ENCODE measurements at regions of chr1 and their contacts with region 1.

Region 1: GRCh38 chr1:170471398-170472053 is 60.4 kb upstream of the GORAB start:
- DNase-seq: no peak
- ATAC-seq: no peak
- H3K4me3 ChIP-seq: no peak overlapping the region
- H3K4me3 Mint-ChIP-seq: no peak overlapping the region
- H3K27ac ChIP-seq: no peak overlapping the region
- H3K27ac Mint-ChIP-seq: no peak overlapping the region
- H3K4me1 ChIP-seq: no peaks in the 10 kb centered on the region
- H3K4me1 Mint-ChIP-seq: no peaks in the 10 kb centered on the region
- H3K27me3 ChIP-seq: no peaks in the 10 kb centered on the region
- H3K27me3 Mint-ChIP-seq: peaks cover 3 to 28% (median 17%) of the 10 kb centered on the region in 5 donors

Region 2: GRCh38 chr1:170410401-170411166 is 60.9 kb before region 1 on chr1:
- CTCF ChIA-PET with region 1: no interaction called
- POLR2A ChIA-PET with region 1: no interaction called
- intact Hi-C with region 1: loop called in 1 of 2 experiments (anchors 10 kb)
- DNase-seq: no peak
- ATAC-seq: no peak
- H3K4me3 ChIP-seq: no peak overlapping the region
- H3K4me3 Mint-ChIP-seq: no peak overlapping the region
- H3K27ac ChIP-seq: no peak overlapping the region
- H3K27ac Mint-ChIP-seq: peak overlapping the region in 1 of 9 donors; percentile 69
- H3K4me1 ChIP-seq: no peaks in the 10 kb centered on the region
- H3K4me1 Mint-ChIP-seq: no peaks in the 10 kb centered on the region
- H3K27me3 ChIP-seq: no peaks in the 10 kb centered on the region
- H3K27me3 Mint-ChIP-seq: peaks cover 0 to 38% (median 12%) of the 10 kb centered on the region in 5 donors

Region 3: DNA sequence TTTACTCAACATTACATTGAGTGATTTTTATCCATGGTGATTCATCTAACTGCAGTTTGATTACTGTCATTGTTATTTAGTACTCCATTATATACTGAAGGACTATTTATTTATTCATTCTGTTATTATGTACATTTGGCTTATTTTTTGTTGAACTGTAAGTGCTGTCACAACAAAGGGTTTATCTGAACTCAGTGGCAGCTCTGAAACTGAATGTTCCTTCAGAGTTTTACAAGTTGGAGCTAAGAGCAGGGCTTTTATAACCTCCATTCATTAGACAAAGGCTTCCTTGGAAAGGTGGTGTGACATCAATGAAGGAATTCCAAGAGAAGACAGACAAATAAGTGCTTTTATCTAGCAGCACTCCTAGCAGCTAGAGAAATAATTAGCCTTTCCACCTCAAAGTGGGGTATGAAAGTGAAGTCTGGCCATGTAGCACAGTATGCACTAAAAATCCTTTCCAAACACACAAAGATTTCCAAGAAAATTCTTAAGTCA is 22.8 kb before region 1 on chr1:
- CTCF ChIA-PET with region 1: no interaction called
- POLR2A ChIA-PET with region 1: no interaction called
- intact Hi-C with region 1: no loop called
- DNase-seq: no peak
- ATAC-seq: no peak
- H3K4me3 ChIP-seq: no peak overlapping the region
- H3K4me3 Mint-ChIP-seq: no peak overlapping the region
- H3K27ac ChIP-seq: no peak overlapping the region
- H3K27ac Mint-ChIP-seq: no peak overlapping the region
- H3K4me1 ChIP-seq: no peaks in the 10 kb centered on the region
- H3K4me1 Mint-ChIP-seq: no peaks in the 10 kb centered on the region
- H3K27me3 ChIP-seq: no peaks in the 10 kb centered on the region
- H3K27me3 Mint-ChIP-seq: peaks cover 0 to 6% (median 0%) of the 10 kb centered on the region in 5 donors

Region 4: DNA sequence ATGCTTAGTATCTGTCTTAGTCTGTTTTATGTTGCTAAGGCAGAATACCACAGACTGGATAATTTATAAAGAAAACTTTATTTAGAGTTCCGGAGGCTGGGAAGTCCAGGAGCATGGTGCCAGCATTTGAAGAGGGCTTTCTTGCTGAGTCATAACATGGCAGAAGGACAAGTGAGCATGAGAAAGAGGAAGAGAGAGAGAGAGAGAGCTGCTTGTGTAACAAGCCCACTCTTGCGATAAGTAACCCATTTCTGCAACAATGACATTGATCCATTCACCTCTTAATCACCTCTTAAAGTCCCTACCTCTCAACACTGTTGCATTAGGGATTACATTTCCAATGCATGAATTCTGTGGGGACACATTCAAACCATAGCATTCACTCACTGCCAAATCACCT is 1138.9 kb after region 1 on chr1:
- CTCF ChIA-PET with region 1: no interaction called
- POLR2A ChIA-PET with region 1: no interaction called
- intact Hi-C with region 1: no loop called
- DNase-seq: no peak
- ATAC-seq: no peak
- H3K4me3 ChIP-seq: no peak overlapping the region
- H3K4me3 Mint-ChIP-seq: no peak overlapping the region
- H3K27ac ChIP-seq: no peak overlapping the region
- H3K27ac Mint-ChIP-seq: no peak overlapping the region
- H3K4me1 ChIP-seq: no peaks in the 10 kb centered on the region
- H3K4me1 Mint-ChIP-seq: no peaks in the 10 kb centered on the region
- H3K27me3 ChIP-seq: no peaks in the 10 kb centered on the region
- H3K27me3 Mint-ChIP-seq: no peaks in the 10 kb centered on the region